K562 (cell line): ENCODE measurements at regions of chr7 and their contacts with region 1.

Region 1: GRCh38 chr7:184294-185264 is 7.8 kb upstream of the FAM20C start:
- DNase-seq: no peak
- ATAC-seq: no peak
- H3K4me3 ChIP-seq: no peak overlapping the region
- H3K27ac ChIP-seq: no peak overlapping the region
- H3K4me1 ChIP-seq: peaks cover 0 to 34% of the 10 kb centered on the region in 2 experiments; a peak in 3 of 5 replicates
- H3K27me3 ChIP-seq: peaks cover 81 to 96% of the 10 kb centered on the region in 2 experiments
- CTCF ChIP-seq: no peak
- EP300 ChIP-seq: no peak
- POLR2A ChIP-seq: no peak
- RAD21 ChIP-seq: no peak

Region 2: GRCh38 chr7:119392-120163 is 65.0 kb before region 1 on chr7:
- CTCF ChIA-PET with region 1: no interaction called
- POLR2A ChIA-PET with region 1: no interaction called
- in situ Hi-C with region 1: loop called (anchors 5 kb)
- intact Hi-C with region 1: no loop called
- DNase-seq: no peak
- ATAC-seq: peak; percentile 10; the same call in 1 of the 3 replicates
- H3K4me3 ChIP-seq: no peak overlapping the region
- H3K27ac ChIP-seq: no peak overlapping the region
- H3K4me1 ChIP-seq: peaks cover 7 to 32% of the 10 kb centered on the region in 2 experiments; a peak in 3 of 5 replicates
- H3K27me3 ChIP-seq: peaks cover 56 to 80% of the 10 kb centered on the region in 2 experiments
- CTCF ChIP-seq: no peak
- EP300 ChIP-seq: no peak
- POLR2A ChIP-seq: no peak
- RAD21 ChIP-seq: no peak